Activated CD8-positive, alpha-beta T cell treated with anti-CD3 and anti-CD28 coated beads for 36 hours (primary cell): ENCODE measurements at regions of chr11 and their contacts with region 1.

Region 1: DNA sequence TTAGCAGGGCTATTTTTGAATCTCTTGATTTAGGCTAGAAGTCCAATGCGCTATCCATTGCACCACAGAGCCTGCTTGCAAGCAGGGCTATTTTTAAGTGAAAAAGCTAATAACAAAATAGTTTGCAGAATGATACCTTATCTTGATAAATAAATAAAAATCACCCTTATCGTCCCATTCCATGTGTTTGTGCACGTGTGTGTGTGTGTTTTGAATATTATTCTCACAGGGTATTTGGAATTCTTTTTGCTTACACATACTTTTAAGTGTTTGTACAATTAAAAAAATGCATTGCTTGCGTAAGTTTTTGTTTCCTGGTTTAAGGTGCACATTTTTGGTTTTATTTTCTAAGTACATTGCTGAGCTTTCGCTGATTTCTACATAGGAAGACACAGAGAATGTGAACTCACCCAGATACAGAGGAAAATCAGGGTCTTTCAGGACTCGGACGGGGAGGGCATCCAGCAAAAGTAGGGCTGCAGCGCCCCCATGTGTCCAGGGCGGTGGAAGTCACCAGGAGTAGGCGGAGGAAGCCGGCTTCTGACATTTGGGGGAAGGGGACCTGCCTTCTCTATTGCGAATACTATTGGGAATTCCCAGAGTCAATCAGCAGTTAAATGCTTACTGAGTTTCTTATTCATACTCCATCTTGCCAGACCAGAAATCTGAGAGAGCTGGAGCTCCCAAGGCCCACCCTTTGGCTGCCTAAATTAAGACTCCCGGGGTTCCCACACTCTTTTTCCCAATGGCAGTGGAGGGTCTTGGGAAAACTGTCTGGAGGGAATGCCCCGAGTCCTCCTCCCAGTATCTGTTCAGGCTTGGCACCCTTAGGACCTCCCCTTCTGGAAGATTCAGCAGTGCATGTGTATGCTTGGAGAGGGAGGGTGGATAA is 27.2 kb downstream of the SLC1A2 start:
- DNase-seq: peak; percentile 88
- ATAC-seq: peak; percentile 81
- H3K4me3 Mint-ChIP-seq: no peak overlapping the region
- H3K27ac Mint-ChIP-seq: no peak overlapping the region
- H3K4me1 Mint-ChIP-seq: peaks cover 25% of the 10 kb centered on the region
- H3K27me3 Mint-ChIP-seq: no peaks in the 10 kb centered on the region
- CTCF ChIP-seq: peak; percentile 99

Region 2: DNA sequence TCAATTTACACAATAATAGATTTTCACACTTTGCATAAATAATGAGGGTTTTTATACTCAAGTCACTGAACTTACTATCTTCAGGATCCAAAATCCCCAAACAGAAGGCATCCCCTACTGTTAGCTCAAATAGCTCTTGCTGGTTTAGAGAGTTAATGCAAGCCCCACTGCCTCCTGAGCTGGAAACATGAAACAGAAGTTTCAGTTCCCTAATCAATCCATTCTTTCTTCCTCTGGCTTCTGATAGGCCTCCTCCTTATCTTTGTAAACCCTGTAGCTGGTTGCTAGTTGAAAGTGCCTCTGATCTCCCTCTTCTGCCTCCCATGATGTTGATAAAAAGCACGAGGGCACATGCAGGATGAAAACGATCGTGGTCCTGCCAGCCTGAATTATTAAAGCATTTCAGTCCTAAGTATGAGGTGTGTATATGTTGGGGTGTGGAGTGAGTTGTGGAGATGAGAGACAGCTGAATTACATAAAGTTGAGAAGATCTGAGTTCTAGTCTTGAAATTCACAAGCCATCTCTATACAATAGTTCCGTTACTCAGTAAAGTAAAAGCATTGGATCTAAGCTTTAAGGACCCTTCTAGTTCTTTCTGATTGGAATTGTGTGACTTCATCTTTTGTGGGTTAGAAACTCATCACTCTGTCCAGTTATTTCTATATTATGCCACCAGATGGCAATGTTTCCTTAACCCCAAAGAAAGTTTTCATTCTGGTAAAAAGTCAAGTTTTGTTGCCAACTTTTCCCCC is 806.3 kb before region 1 on chr11:
- CTCF ChIA-PET with region 1: interaction called, 12 read pairs
- POLR2A ChIA-PET with region 1: no interaction called
- intact Hi-C with region 1: loop called (anchors 5 kb)
- DNase-seq: no peak
- ATAC-seq: no peak
- H3K4me3 Mint-ChIP-seq: no peak overlapping the region
- H3K27ac Mint-ChIP-seq: no peak overlapping the region
- H3K4me1 Mint-ChIP-seq: no peaks in the 10 kb centered on the region
- H3K27me3 Mint-ChIP-seq: peaks cover 42% of the 10 kb centered on the region
- CTCF ChIP-seq: peak; percentile 64

Region 3: GRCh38 chr11:34997952-34998528 is 394.1 kb before region 1 on chr11:
- CTCF ChIA-PET with region 1: interaction called, 51 read pairs
- POLR2A ChIA-PET with region 1: interaction called, 3 read pairs
- intact Hi-C with region 1: loop called (anchors 5 kb)
- DNase-seq: no peak
- ATAC-seq: peak; percentile 42
- H3K4me3 Mint-ChIP-seq: no peak overlapping the region
- H3K27ac Mint-ChIP-seq: no peak overlapping the region
- H3K4me1 Mint-ChIP-seq: peaks cover 25% of the 10 kb centered on the region
- H3K27me3 Mint-ChIP-seq: no peaks in the 10 kb centered on the region
- CTCF ChIP-seq: peak; percentile 90

Region 4: DNA sequence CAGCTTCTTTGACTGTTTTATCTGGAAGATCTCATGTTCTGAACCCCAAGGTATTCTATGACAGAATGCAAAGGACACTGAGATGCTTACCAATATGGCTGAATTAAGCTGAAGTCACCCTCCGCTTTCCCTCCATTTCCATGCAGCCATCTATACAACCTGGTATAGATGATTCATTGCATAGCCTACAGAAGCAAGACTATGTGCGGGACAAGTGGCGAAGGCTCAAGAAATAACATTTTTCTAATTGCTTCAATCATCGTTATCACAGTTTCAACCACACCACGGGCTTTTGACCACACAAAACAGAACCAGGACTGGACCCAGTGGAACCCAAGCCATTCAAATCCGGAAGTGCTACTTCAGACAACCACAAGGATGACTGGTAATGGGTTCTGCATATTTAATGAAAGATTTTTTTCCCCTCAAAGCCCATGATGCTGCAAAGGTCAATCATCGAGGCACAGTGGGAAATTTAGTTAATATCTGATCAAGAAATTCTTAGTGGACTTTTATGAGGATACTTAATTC is 191.3 kb before region 1 on chr11:
- CTCF ChIA-PET with region 1: no interaction called
- POLR2A ChIA-PET with region 1: no interaction called
- intact Hi-C with region 1: no loop called
- DNase-seq: no peak
- ATAC-seq: peak; percentile 10
- H3K4me3 Mint-ChIP-seq: no peak overlapping the region
- H3K27ac Mint-ChIP-seq: peak overlapping the region; percentile 48
- H3K4me1 Mint-ChIP-seq: peaks cover 60% of the 10 kb centered on the region
- H3K27me3 Mint-ChIP-seq: no peaks in the 10 kb centered on the region
- CTCF ChIP-seq: no peak

Region 5: GRCh38 chr11:35237860-35238715 is 154.1 kb before region 1 on chr11:
- CTCF ChIA-PET with region 1: interaction called, 23 read pairs
- POLR2A ChIA-PET with region 1: no interaction called
- intact Hi-C with region 1: loop called (anchors 5 kb)
- DNase-seq: peak; percentile 70
- ATAC-seq: no peak
- H3K4me3 Mint-ChIP-seq: no peak overlapping the region
- H3K27ac Mint-ChIP-seq: no peak overlapping the region
- H3K4me1 Mint-ChIP-seq: peaks cover 79% of the 10 kb centered on the region
- H3K27me3 Mint-ChIP-seq: no peaks in the 10 kb centered on the region
- CTCF ChIP-seq: peak; percentile 88

Region 6: GRCh38 chr11:35376613-35377012 is 15.6 kb before region 1 on chr11:
- CTCF ChIA-PET with region 1: interaction called, 20 read pairs
- POLR2A ChIA-PET with region 1: interaction called, 3 read pairs
- intact Hi-C with region 1: no loop called
- DNase-seq: no peak
- ATAC-seq: no peak
- H3K4me3 Mint-ChIP-seq: no peak overlapping the region
- H3K27ac Mint-ChIP-seq: no peak overlapping the region
- H3K4me1 Mint-ChIP-seq: peaks cover 8% of the 10 kb centered on the region
- H3K27me3 Mint-ChIP-seq: no peaks in the 10 kb centered on the region
- CTCF ChIP-seq: no peak

Region 7: DNA sequence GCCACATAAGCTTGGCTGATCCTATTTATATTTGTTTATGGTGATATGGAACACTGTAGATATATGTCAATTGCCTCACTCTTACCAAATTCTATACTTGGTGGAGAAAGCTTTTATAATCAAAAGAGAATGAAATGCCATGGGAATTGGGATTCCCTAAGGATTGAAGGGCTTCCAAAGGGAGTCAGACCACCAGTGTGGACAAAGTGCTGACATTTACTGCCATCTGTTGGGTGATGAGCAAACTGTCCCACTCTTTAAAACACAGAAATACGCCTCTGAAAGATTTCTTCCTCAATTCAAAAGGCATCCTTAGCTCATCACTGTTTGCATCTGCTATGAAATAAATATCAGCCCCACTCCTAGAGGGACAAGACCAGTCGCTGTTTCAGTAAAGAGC is 20.1 kb after region 1 on chr11:
- CTCF ChIA-PET with region 1: interaction called, 27 read pairs
- POLR2A ChIA-PET with region 1: no interaction called
- intact Hi-C with region 1: no loop called
- DNase-seq: no peak
- ATAC-seq: no peak
- H3K4me3 Mint-ChIP-seq: no peak overlapping the region
- H3K27ac Mint-ChIP-seq: no peak overlapping the region
- H3K4me1 Mint-ChIP-seq: no peaks in the 10 kb centered on the region
- H3K27me3 Mint-ChIP-seq: peaks cover 34% of the 10 kb centered on the region
- CTCF ChIP-seq: peak; percentile 41

Region 8: DNA sequence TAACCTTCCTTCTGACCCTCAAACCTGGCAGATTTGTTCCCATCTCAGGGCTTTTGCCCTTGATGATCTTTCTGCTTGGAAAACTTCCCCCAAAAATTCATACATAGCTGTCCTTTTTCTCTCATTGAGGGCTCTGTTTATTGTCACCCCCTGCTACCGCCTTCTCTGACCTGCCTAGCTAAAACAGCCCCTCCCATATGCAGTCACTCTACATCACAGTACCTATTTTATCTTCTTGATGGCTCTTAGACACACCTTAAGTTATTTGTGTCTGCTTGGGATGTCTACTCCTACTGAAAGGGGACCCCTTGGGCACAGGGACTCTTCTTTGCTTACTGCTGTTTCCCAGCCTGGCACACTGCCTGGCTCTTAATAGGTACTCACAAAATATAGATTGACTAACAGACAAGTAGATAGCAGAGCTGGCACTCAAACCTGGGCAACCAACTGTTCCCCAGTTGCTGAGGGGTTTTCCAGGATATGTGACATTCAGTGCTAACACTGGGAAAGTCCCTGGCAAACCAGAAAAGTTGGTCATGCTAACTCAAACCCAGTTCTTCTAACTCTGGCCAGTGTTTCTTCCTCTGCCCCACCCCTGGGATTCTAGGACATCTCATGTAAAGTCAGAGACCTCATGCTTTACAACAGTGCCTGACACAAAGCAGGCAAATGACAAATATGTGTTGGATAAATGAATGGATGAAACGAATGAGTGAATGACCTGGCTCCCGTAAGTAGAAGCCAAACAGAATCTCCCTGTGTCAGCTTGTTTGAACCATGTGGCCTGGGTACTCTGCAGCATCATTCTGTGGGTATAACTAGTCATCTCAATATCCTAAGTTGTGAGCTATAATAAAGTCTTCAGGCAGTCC is 206.3 kb after region 1 on chr11:
- CTCF ChIA-PET with region 1: no interaction called
- POLR2A ChIA-PET with region 1: no interaction called
- intact Hi-C with region 1: no loop called
- DNase-seq: peak; percentile 11
- ATAC-seq: peak; percentile 68
- H3K4me3 Mint-ChIP-seq: no peak overlapping the region
- H3K27ac Mint-ChIP-seq: no peak overlapping the region
- H3K4me1 Mint-ChIP-seq: peaks cover 6% of the 10 kb centered on the region
- H3K27me3 Mint-ChIP-seq: peaks cover 36% of the 10 kb centered on the region
- CTCF ChIP-seq: no peak

Region 9: DNA sequence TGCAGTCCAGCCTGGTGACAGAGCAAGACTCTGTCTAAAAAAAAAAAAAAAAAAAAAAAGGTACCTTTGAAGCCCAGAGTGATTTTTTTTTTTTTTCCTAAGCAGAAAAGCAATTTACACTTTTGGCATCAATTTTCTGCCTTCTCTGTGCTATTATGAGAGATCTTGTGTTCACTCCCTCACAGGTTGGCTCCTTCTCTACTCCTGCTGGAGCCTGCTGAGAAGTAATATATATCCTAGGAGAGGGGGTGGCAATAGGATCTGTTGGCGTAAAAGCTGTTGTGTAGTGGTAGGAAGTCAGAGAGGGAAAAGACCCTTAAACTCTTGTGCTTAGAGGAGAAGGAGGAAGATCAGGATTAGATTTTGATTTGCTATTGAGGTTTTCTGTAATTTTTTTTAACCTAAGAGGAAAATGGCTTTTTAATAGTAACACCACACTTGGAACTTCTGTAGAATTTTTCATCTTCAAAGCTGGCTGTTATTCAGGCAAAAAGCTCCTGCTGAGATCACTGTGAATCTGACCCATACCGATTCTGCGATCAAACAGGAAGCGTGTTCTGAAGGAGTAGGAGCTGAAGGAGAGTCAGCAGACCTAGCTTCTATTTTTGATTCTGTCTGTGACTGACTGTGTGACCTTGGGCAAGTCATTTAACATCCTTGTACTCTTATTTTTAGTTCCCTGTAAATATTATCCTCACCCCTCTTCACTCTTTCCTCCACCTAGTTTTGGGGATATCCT is 348.1 kb after region 1 on chr11:
- CTCF ChIA-PET with region 1: no interaction called
- POLR2A ChIA-PET with region 1: no interaction called
- intact Hi-C with region 1: no loop called
- DNase-seq: no peak
- ATAC-seq: no peak
- H3K4me3 Mint-ChIP-seq: no peak overlapping the region
- H3K27ac Mint-ChIP-seq: peak overlapping the region; percentile 63
- H3K4me1 Mint-ChIP-seq: peaks cover 20% of the 10 kb centered on the region
- H3K27me3 Mint-ChIP-seq: no peaks in the 10 kb centered on the region
- CTCF ChIP-seq: no peak